WTC11 (cell line): ENCODE measurements at regions of chr1 and their contacts with region 1.

Region 1: DNA sequence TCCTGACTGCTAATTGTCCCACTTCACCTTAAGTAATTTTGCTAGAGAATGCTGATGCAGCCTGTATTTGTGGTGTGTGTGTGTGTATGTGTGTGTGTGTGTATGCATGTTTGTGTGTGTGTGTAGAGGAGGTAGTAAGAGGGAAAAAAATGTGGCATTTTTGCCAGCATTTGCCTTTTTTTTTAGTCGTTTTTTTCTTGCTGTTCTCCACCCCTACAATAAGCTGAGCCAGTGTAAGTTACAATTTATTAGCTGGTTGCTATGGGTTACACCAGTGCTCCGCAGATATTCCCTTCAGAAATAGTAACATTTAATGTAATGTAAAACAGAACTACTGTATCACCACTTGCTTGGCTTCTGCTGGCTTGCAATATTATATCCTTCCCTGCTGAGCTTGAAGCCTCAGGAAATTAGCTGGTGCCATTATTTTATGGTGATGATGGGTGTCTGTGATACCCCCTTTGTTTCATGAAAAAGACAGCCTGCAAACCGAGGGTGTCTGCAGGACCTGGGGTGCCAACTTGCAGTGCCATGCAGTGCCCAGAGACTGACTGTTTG is 23.4 kb upstream of the IGSF3 start:
- DNase-seq: no peak
- ATAC-seq: no peak
- H3K4me3 Mint-ChIP-seq: no peak overlapping the region
- H3K27ac Mint-ChIP-seq: no peak overlapping the region
- H3K4me1 Mint-ChIP-seq: peaks cover 28% of the 10 kb centered on the region
- H3K27me3 Mint-ChIP-seq: no peaks in the 10 kb centered on the region
- CTCF ChIP-seq: no peak

Region 2: DNA sequence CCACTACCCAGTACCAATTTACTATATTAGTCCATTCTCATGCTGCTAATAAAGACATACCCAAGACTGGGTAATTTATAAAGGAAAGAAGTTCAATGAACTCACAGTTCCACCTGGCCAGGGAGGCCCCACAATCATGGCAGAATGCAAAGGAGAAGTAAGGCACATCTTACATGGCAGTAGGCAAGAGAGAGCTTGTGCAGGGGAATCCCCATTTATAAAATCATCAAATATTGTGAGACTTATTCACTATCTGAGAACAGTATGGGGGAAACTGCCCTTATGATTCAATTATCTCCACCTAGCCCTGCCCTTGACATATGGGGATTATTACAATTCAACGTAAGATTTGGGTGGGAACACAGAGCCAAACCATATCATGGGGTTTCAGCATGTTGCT is 126.5 kb before region 1 on chr1:
- CTCF ChIA-PET with region 1: no interaction called
- POLR2A ChIA-PET with region 1: no interaction called
- DNase-seq: no peak
- ATAC-seq: no peak
- H3K4me3 Mint-ChIP-seq: no peak overlapping the region
- H3K27ac Mint-ChIP-seq: no peak overlapping the region
- H3K4me1 Mint-ChIP-seq: peaks cover 21% of the 10 kb centered on the region
- H3K27me3 Mint-ChIP-seq: no peaks in the 10 kb centered on the region
- CTCF ChIP-seq: no peak

Region 3: GRCh38 chr1:116667575-116668105 is 23.3 kb before region 1 on chr1 and contains the start of gene IGSF3:
- CTCF ChIA-PET with region 1: interaction called, 15 read pairs
- POLR2A ChIA-PET with region 1: no interaction called
- DNase-seq: peak; percentile 82
- ATAC-seq: peak; percentile 86
- H3K4me3 Mint-ChIP-seq: peak within 1 kb of the TSS; percentile 83
- H3K27ac Mint-ChIP-seq: no peak within 1 kb of the TSS
- H3K4me1 Mint-ChIP-seq: peaks cover 38% of the 10 kb centered on the region
- H3K27me3 Mint-ChIP-seq: peaks cover 29% of the 10 kb centered on the region
- CTCF ChIP-seq: no peak
- total RNA-seq, gene IGSF3: 31.7 to 32.4 TPM (median 32.1 TPM) in 3 replicates